ENCODE measurements at regions of chr4 and their contacts with region 1.

Region 1: DNA sequence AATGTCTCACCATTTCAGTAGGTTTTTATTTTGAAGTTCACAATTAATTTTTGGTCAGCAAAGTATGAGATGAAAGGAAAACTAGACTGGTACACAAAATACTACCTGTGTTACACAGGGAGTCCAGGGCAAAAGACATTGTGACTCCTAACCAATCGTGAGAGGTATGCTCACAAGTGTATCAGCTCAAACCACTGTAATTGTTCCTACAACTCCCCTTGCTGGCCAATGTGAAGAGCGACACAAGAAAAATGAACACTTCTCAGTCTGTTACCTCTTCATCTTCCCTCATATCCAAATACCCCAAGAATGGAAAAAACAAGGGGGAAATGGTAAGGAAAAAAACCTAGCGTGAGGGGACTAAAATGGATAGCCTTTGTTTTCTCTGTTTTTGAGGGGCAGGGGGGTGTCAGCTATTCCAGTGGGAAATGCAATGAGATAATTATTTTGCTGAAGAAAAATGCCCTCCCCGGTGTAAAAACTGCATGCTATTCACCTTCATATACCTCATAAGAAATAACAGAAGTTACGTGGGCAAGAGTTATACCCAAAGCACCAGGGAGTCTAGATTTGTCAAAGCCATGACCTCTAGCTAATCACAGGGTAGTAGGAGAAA is 30.6 kb upstream of the NSUN7 start:
- DNase-seq: peak; percentile 70
- H3K4me3 Mint-ChIP-seq: no peak overlapping the region
- H3K27ac Mint-ChIP-seq: peak overlapping the region; percentile 4
- H3K4me1 Mint-ChIP-seq: peaks cover 35% of the 10 kb centered on the region
- H3K27me3 Mint-ChIP-seq: no peaks in the 10 kb centered on the region

Region 2: DNA sequence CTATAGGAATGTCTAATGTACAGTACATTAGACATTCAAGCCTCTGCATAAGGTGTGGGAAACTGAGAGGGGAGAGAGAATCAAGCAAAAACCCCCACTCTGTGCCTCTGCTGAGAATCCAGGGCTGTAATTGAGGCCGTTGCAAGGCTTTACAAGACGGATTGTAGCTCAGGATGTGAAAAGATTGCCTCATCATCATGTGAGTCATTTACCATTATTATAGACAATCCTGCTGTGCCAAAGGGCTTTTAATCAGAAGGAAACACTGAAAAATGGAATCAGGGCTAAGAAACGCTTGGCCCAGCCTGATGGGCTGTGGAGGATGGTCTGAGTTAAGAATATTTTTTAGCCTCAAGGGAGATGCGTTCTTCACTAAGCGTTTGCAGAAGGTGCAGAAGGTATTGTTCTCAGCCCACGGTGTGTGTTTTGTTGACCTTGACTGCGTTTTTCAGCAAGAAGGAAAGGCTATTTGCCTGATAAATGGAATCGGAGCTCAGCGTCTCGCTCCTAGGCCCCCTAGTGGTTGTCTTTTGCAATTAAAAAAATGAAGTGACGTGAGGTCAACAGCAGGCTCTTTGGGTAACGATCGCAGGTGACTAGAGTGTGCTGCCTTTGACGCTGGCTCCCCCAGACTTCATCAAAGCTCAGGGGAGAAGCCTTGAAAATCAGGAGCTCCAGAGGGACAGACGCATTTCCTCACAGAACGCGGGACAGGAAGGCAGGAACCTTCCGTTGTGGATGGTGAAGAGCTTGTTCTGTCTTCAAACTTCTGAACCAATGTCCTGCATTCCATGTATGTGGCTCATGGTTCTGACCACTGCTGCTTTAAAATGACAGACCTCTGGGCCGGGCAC is 402.1 kb before region 1 on chr4:
- intact Hi-C with region 1: loop called (anchors 2 kb)
- DNase-seq: peak; percentile 91
- H3K4me3 Mint-ChIP-seq: peak overlapping the region; percentile 91
- H3K27ac Mint-ChIP-seq: peak overlapping the region; percentile 100
- H3K4me1 Mint-ChIP-seq: peaks cover 48% of the 10 kb centered on the region
- H3K27me3 Mint-ChIP-seq: no peaks in the 10 kb centered on the region

Region 3: DNA sequence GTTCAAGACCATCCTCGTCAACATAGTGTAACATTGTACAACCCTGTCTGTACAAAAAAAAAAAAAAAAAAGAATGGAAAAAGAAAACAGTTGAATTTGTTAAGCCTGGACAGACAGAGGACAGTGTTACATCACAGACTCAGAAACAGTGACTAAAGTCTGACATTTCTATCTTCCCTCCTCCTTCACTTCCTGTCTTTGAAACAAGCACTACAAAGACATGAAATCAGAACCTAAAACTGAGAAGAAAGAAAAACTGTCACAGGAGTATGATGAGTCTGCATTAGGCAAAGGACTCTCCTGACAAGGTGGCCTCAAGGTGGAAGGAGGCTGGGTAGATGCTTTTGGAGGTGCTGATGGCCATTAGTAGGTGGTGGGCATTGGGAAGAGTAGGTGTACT is 216.2 kb before region 1 on chr4:
- intact Hi-C with region 1: no loop called
- DNase-seq: peak; percentile 63
- H3K4me3 Mint-ChIP-seq: peak overlapping the region; percentile 60
- H3K27ac Mint-ChIP-seq: peak overlapping the region; percentile 87
- H3K4me1 Mint-ChIP-seq: peaks cover 19% of the 10 kb centered on the region
- H3K27me3 Mint-ChIP-seq: no peaks in the 10 kb centered on the region

Region 4: GRCh38 chr4:40515398-40516293 is 203.5 kb before region 1 on chr4:
- intact Hi-C with region 1: loop called (anchors 5 kb)
- DNase-seq: peak; percentile 65
- H3K4me3 Mint-ChIP-seq: peak overlapping the region; percentile 1
- H3K27ac Mint-ChIP-seq: peak overlapping the region; percentile 63
- H3K4me1 Mint-ChIP-seq: peaks cover 28% of the 10 kb centered on the region
- H3K27me3 Mint-ChIP-seq: no peaks in the 10 kb centered on the region

Region 5: DNA sequence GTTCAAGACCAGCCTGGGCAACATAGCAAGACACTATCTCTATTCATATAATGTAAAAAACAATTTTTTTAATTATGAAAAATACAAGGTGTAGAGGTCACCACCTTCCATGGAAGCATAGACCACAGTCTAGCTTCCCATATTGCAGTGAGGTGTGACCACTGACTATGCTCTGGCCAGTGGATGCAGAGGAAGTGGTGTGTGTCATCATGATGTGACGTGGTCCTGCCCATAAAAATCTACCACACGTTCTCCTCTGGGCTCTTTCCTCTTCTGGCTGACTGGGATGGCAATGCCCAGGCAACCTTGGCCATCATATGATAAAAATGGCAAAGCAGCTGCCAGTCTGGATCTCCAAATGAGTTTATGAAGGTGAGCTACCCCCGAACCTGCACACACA is 155.1 kb before region 1 on chr4:
- intact Hi-C with region 1: no loop called
- DNase-seq: no peak
- H3K4me3 Mint-ChIP-seq: no peak overlapping the region
- H3K27ac Mint-ChIP-seq: no peak overlapping the region
- H3K4me1 Mint-ChIP-seq: peaks cover 14% of the 10 kb centered on the region
- H3K27me3 Mint-ChIP-seq: no peaks in the 10 kb centered on the region

Region 6: GRCh38 chr4:40629401-40630334 is 89.4 kb before region 1 on chr4 and contains the start of gene RBM47:
- intact Hi-C with region 1: loop called (anchors 1 kb)
- DNase-seq: peak; percentile 73
- H3K4me3 Mint-ChIP-seq: peak within 1 kb of the TSS; percentile 89
- H3K27ac Mint-ChIP-seq: peak within 1 kb of the TSS; percentile 64
- H3K4me1 Mint-ChIP-seq: peaks cover 34% of the 10 kb centered on the region
- H3K27me3 Mint-ChIP-seq: peaks cover 20% of the 10 kb centered on the region
- total RNA-seq, gene RBM47: 10.7 and 13.0 TPM in 2 replicates

Region 7: DNA sequence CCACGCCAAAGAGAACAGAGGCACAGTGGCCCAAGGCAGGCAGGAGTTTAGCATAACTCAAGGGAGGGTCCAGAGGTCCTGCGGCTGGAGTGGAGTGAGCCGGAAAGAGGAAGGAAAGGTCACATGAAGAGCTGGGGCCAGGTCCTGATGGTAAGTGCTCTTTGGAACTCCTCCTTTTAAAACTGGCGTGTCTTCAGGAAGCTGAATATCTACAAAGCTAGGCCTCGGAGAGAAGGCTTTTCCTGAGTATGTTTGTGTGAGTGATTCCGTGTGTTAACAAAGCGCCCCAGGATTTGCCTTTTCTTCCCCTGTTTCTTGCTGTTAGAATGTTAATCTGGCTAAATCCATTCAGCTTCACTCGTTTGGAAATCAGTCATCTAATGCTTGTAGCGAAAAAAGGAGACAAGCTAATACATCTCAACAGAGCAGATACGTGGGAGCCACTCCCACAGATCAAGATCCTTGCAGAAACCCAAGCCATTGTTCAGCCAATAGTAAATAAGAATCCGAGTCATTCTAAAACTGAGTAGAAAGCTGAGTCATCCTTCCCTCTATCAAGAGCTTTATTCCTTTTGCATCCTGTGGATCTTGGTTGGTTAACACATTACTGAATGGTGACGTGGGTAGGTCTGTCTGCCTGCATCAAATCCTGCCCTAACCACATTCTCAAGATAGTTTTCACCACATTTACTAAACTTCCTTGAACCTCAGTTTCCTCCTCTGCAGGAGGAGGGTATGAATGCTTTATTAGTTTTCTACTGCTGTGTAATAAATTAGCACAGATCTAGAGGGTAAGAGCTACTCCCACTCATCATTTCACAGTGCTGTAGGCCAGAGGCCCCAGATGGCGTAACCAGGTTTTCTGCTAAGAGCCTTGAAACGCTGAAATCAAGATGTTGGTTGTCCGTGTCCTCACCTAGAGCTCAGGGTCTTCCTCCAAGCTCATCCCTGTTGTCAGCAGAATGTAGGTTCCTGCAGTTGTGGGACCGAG is 46.3 kb before region 1 on chr4:
- intact Hi-C with region 1: loop called (anchors 1 kb)
- DNase-seq: peak; percentile 87
- H3K4me3 Mint-ChIP-seq: peak overlapping the region; percentile 69
- H3K27ac Mint-ChIP-seq: peak overlapping the region; percentile 93
- H3K4me1 Mint-ChIP-seq: peaks cover 57% of the 10 kb centered on the region
- H3K27me3 Mint-ChIP-seq: no peaks in the 10 kb centered on the region

Region 8: GRCh38 chr4:40699648-40700047 is 19.5 kb before region 1 on chr4:
- intact Hi-C with region 1: loop called (anchors 1 kb)
- DNase-seq: no peak
- H3K4me3 Mint-ChIP-seq: peak overlapping the region; percentile 4
- H3K27ac Mint-ChIP-seq: peak overlapping the region; percentile 67
- H3K4me1 Mint-ChIP-seq: peaks cover 26% of the 10 kb centered on the region
- H3K27me3 Mint-ChIP-seq: no peaks in the 10 kb centered on the region

Measured in activated CD4-positive, alpha-beta T cell treated with anti-CD3 and anti-CD28 coated beads, Interleukin-2, amount 10 ng/mL, durations not matched to agents 24 days and 14 days (primary cell).